ENCODE measurements at regions of chr9 and their contacts with region 1.

Region 1: DNA sequence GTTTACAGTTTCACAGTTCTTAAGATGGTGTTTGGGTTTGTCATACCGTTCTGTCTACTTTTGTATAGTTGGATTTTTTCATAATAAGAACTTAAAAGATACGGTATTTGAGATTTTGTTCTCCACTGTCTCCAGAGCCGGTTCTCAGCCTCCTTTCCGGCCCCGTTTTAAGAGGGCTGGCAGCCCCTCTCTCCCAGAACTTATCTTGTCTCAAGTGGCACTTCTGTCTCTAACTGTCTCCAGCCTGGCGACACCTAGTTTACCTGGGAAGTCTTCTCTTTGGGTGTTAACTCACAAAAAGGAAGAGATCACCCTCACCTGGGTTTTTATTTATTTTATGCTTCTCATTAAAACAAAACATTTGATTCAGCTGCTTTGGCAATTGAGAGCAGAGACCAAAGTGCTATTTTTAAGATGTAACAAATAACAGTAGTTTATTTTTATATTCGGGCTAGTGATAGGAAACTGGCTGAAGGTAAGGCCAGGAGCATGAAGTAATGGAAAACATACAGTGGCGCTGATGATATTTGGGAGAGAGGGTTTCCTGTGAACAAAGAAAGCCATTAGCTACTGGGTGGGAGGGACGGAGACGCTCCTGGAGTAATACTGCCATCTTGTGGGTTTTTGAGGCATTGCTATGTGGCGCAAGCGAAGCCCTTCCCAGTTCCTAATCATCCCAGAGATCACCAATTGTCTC is 48.3 kb downstream of the ACER2 start:
- DNase-seq: peak; percentile 37 to 74 (median 62)
- H3K4me3 ChIP-seq: no peak overlapping the region
- H3K27ac ChIP-seq: no peak overlapping the region
- H3K4me1 ChIP-seq: no peaks in the 10 kb centered on the region
- H3K27me3 ChIP-seq: no peaks in the 10 kb centered on the region
- CTCF ChIP-seq: peak; percentile 85 to 87 (median 87)
- EP300 ChIP-seq: no peak
- POLR2A ChIP-seq: no peak

Region 2: GRCh38 chr9:19048966-19049916 is 407.9 kb before region 1 on chr9 and contains the start of gene RRAGA:
- intact Hi-C with region 1: loop called in 2 of 4 experiments (anchors 10 kb)
- DNase-seq: peak; percentile 94 to 98 (median 96)
- H3K4me3 ChIP-seq: peak within 1 kb of the TSS; percentile 73
- H3K27ac ChIP-seq: peak within 1 kb of the TSS; percentile 95 to 96
- H3K4me1 ChIP-seq: peaks cover 10% of the 10 kb centered on the region
- H3K27me3 ChIP-seq: no peaks in the 10 kb centered on the region
- CTCF ChIP-seq: peak; percentile 94 to 96 (median 94)
- EP300 ChIP-seq: no peak
- POLR2A ChIP-seq: peak; percentile 85
- total RNA-seq, gene RRAGA: 36.6 to 111 (median 104) TPM

Region 3: DNA sequence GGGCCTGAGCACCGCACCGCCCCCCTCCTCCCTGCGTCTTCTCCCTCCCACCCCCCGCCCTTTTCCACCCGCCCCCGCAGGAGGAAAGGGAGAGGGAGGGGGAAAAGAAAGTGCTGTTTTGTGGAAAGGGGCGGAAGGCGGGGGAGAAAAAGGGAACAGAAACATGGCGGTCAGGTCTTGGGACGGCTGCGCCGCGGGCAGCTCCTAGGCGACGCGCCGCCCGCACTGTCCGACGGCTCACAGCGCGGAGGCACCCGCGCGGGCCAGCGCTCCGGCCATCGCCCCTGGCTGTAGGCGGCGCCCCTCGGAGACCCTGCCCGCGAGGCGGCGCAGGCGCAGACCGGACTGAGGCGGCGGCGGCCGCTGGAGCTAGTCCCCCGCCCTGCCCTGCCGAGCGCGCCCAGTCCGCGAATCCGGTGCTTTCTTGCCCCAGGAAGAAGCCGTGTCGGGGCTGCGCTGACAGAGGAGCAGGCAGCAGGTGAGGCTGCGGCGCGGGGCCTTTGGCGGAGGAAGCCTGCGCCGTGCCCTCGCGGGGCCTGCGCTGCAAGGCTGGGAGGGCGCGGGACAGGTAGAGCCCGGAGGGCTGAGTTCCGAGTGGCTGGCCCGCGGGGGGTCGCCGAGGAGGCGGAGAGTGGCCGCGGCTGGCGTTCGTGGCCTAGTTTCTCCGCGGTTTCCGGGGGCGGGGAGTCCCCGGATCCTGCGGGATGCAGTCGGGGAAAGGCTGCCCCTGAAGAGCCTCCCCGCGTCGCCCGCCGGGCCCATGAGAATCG is 226.6 kb before region 1 on chr9 and contains the start of gene DENND4C:
- intact Hi-C with region 1: loop called in 1 of 4 experiments (anchors 10 kb)
- DNase-seq: peak; percentile 81 to 89 (median 86)
- H3K4me3 ChIP-seq: peak within 1 kb of the TSS; percentile 86
- H3K27ac ChIP-seq: peak within 1 kb of the TSS; percentile 95 to 98
- H3K4me1 ChIP-seq: peaks cover 3% of the 10 kb centered on the region
- H3K27me3 ChIP-seq: no peaks in the 10 kb centered on the region
- CTCF ChIP-seq: peak in 1 of 3 donors; percentile 46
- EP300 ChIP-seq: no peak
- POLR2A ChIP-seq: peak; percentile 71
- total RNA-seq, gene DENND4C: 52.6 to 83.9 (median 60.5) TPM

Region 4: DNA sequence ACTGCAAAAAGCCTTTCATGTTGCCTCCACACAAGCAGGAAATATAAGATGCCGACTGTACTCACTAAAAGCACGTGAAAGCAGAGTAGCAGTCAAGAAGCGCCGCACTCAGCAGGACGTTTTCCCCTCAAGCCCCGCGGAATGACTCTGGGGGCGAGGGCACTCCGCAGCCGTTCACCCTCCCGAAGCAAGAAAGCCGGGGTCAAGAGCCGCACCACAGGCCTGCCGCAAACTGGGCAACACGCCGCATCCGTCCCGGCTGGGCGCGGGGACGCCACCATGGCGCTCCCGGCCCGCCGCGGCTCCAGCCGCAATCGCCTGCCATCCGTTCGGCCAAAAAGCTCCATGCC is 77.5 kb before region 1 on chr9:
- intact Hi-C with region 1: loop called in 1 of 4 experiments (anchors 10 kb)
- DNase-seq: no peak
- H3K4me3 ChIP-seq: peak overlapping the region; percentile 55
- H3K27ac ChIP-seq: peak overlapping the region; percentile 70 to 82
- H3K4me1 ChIP-seq: no peaks in the 10 kb centered on the region
- H3K27me3 ChIP-seq: no peaks in the 10 kb centered on the region
- CTCF ChIP-seq: peak in 1 of 3 donors; percentile 36
- EP300 ChIP-seq: no peak
- POLR2A ChIP-seq: no peak

Region 5: DNA sequence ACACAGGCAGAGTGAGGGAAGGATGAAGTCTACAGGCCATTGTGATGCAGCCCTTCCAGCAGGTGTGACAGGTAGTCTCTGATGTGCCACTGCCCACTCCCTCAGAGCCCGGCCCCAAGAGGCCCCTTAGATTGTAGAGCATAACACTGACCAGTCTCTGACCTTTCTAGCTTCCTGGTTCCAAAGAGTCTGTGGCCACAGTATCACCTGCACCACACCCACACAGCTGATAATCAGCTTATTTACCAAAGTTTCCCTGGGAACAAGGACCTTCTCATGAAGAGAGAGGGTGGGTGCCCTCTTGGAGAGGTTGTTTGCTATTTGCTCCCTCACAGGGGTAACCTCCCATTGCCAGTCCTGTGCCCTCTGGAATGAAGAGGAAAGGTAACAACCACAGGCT is 59.3 kb before region 1 on chr9:
- intact Hi-C with region 1: loop called in 1 of 4 experiments (anchors 10 kb)
- DNase-seq: no peak
- H3K4me3 ChIP-seq: no peak overlapping the region
- H3K27ac ChIP-seq: no peak overlapping the region
- H3K4me1 ChIP-seq: no peaks in the 10 kb centered on the region
- H3K27me3 ChIP-seq: no peaks in the 10 kb centered on the region
- CTCF ChIP-seq: no peak
- EP300 ChIP-seq: no peak
- POLR2A ChIP-seq: no peak